Left ventricle myocardium inferior (tissue), 1 donor: ENCODE measurements at regions of chr21 and their contacts with region 1.

Region 1: GRCh38 chr21:31098576-31099005 is 60.3 kb upstream of the KRTAP19-8 start:
- DNase-seq: peak; percentile 69
- H3K4me3 ChIP-seq: no peak overlapping the region
- H3K27ac ChIP-seq: no peak overlapping the region
- H3K4me1 ChIP-seq: no peaks in the 10 kb centered on the region
- H3K27me3 ChIP-seq: peaks cover 44% of the 10 kb centered on the region
- CTCF ChIP-seq: peak; percentile 91

Region 2: GRCh38 chr21:30349572-30349971 is 749.0 kb before region 1 on chr21:
- intact Hi-C with region 1: no loop called
- DNase-seq: no peak
- H3K4me3 ChIP-seq: no peak overlapping the region
- H3K27ac ChIP-seq: no peak overlapping the region
- H3K4me1 ChIP-seq: no peaks in the 10 kb centered on the region
- H3K27me3 ChIP-seq: no peaks in the 10 kb centered on the region
- CTCF ChIP-seq: no peak

Region 3: DNA sequence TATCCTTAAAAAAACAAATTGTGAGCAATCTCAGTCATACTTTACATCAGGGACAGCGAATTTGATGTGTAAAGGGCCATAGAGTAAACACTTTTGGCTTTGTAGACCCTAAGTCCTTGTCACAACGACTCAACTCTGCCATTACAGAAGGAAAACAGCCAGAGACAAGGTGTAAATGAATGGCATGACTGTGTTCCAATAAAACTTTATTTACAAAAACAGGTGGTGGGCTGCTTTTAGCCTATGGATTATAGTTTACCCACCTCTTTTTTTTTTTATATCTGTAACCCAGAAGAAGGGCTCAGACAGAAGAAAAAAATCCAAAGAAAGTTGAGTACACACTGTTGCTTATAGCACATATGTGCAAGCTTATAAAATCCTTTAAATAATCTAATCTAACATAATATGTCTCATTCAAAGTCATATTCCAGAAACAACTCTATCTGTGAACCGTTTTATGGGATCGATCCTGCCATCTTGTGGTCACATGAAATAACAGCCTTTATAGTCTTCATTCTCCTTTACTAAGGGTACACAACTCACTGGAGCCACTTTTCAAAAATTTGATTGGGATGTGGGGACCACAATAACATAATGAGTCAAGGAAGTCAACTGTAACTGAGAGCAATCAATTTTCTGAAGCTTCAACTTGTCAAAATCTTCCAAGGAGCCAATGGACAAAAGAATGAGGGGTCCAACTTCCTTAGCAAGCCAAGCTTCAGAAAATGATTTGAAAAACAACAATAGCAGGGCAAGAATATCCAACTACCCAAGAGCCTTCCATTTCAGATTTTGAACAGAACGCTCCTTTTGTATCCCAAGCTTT is 81.9 kb after region 1 on chr21:
- intact Hi-C with region 1: loop called (anchors 2 kb)
- DNase-seq: no peak
- H3K4me3 ChIP-seq: no peak overlapping the region
- H3K27ac ChIP-seq: no peak overlapping the region
- H3K4me1 ChIP-seq: no peaks in the 10 kb centered on the region
- H3K27me3 ChIP-seq: peaks cover 5% of the 10 kb centered on the region
- CTCF ChIP-seq: peak; percentile 67